Psoas muscle (tissue), 8 donors: ENCODE measurements at regions of chrX and their contacts with region 1.

Region 1: GRCh38 chrX:110317820-110318658 is at the start of gene AMMECR1:
- DNase-seq: peak; percentile 80 to 90
- ATAC-seq: peak; percentile 95 to 97 (median 97)
- H3K4me3 ChIP-seq: peak within 1 kb of the TSS; percentile 74
- H3K27ac ChIP-seq: peak within 1 kb of the TSS; percentile 80
- H3K4me1 ChIP-seq: no peaks in the 10 kb centered on the region
- H3K27me3 ChIP-seq: peaks cover 0 to 6% (median 0%) of the 10 kb centered on the region in 3 donors
- CTCF ChIP-seq: no peak
- total RNA-seq, gene AMMECR1: 0.82 to 2.4 (median 1.4) TPM

Region 2: DNA sequence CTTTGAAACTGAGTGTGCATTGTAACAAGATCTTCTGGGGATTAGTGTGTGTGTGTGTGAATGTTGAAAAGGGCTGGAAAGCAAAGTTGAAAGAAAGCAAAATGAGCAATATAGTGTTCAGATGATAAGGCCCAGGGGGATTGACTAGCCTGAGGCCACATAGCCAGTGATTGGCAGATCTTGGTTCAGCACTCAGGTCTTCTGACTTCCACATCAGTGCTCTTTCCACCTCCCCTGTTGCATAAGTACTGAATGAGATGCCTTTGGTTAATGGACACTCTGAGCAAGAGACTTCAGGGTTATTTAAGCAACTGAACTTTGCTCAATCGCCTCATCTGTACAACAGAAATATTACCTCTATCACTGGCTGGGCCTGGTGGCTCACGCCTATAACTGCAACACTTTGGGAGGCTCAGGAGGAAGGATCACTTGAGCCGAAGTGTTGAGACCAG is 194.7 kb before region 1 on chrX:
- intact Hi-C with region 1: no loop called
- DNase-seq: no peak
- ATAC-seq: peak in 3 of 4 donors; percentile 64 to 76 (median 70)
- H3K4me3 ChIP-seq: no peak overlapping the region
- H3K27ac ChIP-seq: no peak overlapping the region
- H3K4me1 ChIP-seq: no peaks in the 10 kb centered on the region
- H3K27me3 ChIP-seq: peaks cover 0 to 3% (median 0%) of the 10 kb centered on the region in 3 donors
- CTCF ChIP-seq: no peak

Region 3: DNA sequence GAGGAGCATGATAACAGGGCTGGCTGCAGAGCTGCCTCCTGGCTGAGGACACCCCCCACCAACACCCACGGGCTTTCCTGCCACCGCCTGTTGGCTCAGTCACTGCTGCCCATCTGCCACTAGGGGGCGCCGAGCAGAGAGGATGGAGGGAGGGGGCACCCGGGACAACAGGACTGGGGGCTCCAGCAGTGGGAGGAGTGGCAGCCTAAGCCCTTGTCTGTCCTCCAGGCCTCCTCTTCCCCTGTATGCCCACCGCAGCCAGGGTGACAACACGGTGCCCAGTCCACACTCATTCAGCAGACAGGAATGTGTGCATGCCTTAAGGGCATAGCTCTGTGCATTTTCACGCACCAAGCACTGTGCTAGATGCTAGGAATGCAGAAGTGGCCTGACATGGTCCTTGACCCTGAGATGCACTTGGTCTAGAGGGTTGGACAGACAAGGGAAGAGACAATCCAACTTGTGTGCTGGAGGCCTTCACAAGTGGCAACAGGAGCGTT is 150.0 kb before region 1 on chrX:
- intact Hi-C with region 1: loop called in 1 of 2 experiments (anchors 10 kb)
- DNase-seq: peak in 1 of 2 donors; percentile 60
- ATAC-seq: peak; percentile 25 to 64 (median 34)
- H3K4me3 ChIP-seq: no peak overlapping the region
- H3K27ac ChIP-seq: no peak overlapping the region
- H3K4me1 ChIP-seq: peaks cover 3% of the 10 kb centered on the region
- H3K27me3 ChIP-seq: peaks cover 0 to 2% (median 0%) of the 10 kb centered on the region in 3 donors
- CTCF ChIP-seq: peak; percentile 35

Region 4: GRCh38 chrX:110248582-110248981 is 69.5 kb before region 1 on chrX:
- intact Hi-C with region 1: no loop called
- DNase-seq: no peak
- ATAC-seq: no peak
- H3K4me3 ChIP-seq: no peak overlapping the region
- H3K27ac ChIP-seq: no peak overlapping the region
- H3K4me1 ChIP-seq: no peaks in the 10 kb centered on the region
- H3K27me3 ChIP-seq: peaks cover 0 to 7% (median 0%) of the 10 kb centered on the region in 3 donors
- CTCF ChIP-seq: no peak

Region 5: GRCh38 chrX:111680988-111681779 is 1363.1 kb after region 1 on chrX and contains the start of gene ALG13:
- intact Hi-C with region 1: no loop called
- DNase-seq: peak; percentile 89 to 94
- ATAC-seq: peak; percentile 95 to 97 (median 96)
- H3K4me3 ChIP-seq: peak within 1 kb of the TSS; percentile 79
- H3K27ac ChIP-seq: peak within 1 kb of the TSS; percentile 94
- H3K4me1 ChIP-seq: no peaks in the 10 kb centered on the region
- H3K27me3 ChIP-seq: peaks cover 0 to 12% (median 0%) of the 10 kb centered on the region in 3 donors
- CTCF ChIP-seq: peak; percentile 78
- total RNA-seq, gene ALG13: 14.3 to 20.0 (median 17.6) TPM